ENCODE measurements at regions of chr6 and their contacts with region 1.

Region 1: DNA sequence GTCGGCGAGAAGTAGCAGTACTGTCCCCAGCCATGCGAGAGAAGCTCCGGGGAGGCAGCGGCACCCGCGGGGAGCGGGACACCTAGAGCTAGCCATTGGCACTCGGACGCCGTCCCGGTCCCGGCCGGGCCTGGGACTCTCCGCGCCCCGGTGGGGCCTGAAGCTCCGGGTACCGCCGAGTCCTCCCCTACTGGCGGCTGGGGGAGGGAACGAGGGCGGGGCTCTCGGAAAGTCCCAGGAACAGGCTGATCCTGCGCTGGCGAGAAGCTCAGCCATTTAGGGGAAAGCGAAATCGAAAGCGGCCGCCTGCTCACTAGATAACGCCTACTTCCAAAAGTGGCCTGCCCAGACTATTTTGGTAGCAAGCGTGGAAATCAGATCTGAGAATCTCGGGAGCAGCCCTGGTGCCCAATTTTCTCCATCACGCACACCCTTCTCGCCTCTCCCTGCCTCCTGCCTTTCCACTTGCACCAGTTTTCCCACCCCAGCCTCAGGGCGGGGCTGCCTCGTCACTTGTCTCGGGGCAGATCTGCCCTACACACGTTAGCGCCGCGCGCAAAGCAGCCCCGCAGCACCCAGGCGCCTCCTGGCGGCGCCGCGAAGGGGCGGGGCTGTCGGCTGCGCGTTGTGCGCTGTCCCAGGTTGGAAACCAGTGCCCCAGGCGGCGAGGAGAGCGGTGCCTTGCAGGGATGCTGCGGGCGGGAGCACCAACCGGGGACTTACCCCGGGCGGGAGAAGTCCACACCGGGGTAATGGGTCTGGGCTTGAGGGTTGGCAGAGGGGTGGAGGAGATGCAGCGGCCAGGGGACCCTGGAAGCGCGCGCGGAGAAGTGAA is at the starts of genes PSMB9 and TAP1:
- DNase-seq: peak; percentile 92
- H3K4me3 Mint-ChIP-seq: peak within 1 kb of the TSS; percentile 98
- H3K27ac Mint-ChIP-seq: peak within 1 kb of the TSS; percentile 99
- H3K4me1 Mint-ChIP-seq: peaks cover 71% of the 10 kb centered on the region
- H3K27me3 Mint-ChIP-seq: no peaks in the 10 kb centered on the region
- total RNA-seq, gene PSMB9: 249 and 253 TPM in 2 replicates
- total RNA-seq, gene TAP1: 284 and 290 TPM in 2 replicates

Region 2: DNA sequence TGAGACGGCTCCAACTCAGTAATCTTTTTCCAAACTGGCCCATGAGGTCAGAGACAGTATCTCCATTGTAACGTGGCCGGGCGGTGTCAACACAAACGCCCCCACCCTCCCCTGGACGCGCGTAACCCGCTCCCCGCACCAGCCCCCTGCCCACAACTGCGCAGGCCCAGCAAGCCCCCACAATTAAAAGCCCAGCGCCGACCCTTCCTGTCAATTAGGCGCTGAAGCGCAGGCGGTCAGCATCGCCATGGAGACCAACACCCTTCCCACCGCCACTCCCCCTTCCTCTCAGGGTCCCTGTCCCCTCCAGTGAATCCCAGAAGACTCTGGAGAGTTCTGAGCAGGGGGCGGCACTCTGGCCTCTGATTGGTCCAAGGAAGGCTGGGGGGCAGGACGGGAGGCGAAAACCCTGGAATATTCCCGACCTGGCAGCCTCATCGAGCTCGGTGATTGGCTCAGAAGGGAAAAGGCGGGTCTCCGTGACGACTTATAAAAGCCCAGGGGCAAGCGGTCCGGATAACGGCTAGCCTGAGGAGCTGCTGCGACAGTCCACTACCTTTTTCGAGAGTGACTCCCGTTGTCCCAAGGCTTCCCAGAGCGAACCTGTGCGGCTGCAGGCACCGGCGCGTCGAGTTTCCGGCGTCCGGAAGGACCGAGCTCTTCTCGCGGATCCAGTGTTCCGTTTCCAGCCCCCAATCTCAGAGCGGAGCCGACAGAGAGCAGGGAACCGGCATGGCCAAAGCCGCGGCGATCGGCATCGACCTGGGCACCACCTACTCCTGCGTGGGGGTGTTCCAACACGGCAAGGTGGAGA is 1038.5 kb before region 1 on chr6 and contains the starts of genes HSPA1A and HSPA1L:
- intact Hi-C with region 1: loop called (anchors 10 kb)
- DNase-seq: peak; percentile 75
- H3K4me3 Mint-ChIP-seq: peak within 1 kb of the TSS; percentile 93
- H3K27ac Mint-ChIP-seq: peak within 1 kb of the TSS; percentile 95
- H3K4me1 Mint-ChIP-seq: peaks cover 50% of the 10 kb centered on the region
- H3K27me3 Mint-ChIP-seq: no peaks in the 10 kb centered on the region
- total RNA-seq, gene HSPA1A: 173 and 175 TPM in 2 replicates
- total RNA-seq, gene HSPA1L: 2.2 and 2.9 TPM in 2 replicates

Region 3: DNA sequence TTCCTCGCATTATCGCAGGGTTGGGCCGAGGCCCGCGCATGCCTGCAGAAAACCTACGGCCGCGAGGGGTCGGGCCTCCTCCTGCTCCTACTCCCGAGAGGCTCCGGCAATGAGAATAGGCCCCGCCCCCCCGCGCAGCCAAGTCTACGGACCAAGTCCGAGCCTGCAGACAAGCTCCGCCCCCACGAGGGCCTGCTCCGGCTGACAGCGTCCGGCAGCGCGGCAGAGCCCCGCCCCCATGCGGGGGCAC is 658.2 kb before region 1 on chr6:
- intact Hi-C with region 1: loop called (anchors 2 kb)
- DNase-seq: peak; percentile 100
- H3K4me3 Mint-ChIP-seq: peak overlapping the region; percentile 97
- H3K27ac Mint-ChIP-seq: peak overlapping the region; percentile 98
- H3K4me1 Mint-ChIP-seq: peaks cover 48% of the 10 kb centered on the region
- H3K27me3 Mint-ChIP-seq: peaks cover 2% of the 10 kb centered on the region

Region 4: DNA sequence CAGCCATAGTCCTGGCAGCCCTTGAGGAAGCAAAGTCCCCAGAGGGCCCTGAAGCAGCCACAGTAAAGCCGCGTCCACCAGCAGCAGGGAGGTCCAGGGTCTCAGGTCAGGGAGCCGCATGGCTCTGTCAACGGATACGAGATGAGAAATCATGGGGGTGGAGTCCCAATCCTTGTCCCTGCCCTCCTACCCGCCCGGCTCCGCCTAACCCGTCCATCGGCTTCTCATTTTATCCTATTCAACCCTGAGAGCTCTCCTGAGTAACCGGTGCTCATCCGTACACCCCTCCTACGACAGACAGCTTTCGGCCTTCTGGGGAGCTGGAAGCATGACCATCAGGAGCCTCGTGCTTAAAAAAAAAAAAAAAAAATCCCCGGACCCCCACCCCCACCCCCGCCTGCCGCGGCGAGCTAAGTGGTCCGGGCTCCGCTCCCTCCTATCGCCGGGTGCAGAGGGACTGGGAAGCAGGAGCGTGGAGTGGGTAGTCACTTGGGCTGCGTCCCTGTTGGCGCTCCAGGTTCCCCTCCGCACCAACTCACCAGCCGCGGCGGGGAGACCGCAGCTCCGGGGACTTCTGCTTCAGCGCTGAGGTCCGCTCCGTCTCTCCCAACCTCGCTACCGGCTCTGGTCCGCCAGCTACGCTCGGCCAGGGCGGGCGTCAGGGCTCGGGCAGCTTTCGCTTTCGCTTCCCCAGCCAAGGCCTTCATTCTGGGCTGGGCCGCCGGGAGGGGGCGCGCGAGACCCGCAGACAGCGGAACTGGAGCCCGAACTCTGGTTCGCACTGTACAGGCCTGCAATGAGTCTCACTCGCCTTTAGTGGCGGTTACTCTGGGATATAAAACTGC is 15.4 kb before region 1 on chr6 and contains the start of gene TAP2:
- intact Hi-C with region 1: loop called (anchors 1 kb)
- DNase-seq: peak; percentile 97
- H3K4me3 Mint-ChIP-seq: peak within 1 kb of the TSS; percentile 79
- H3K27ac Mint-ChIP-seq: peak within 1 kb of the TSS; percentile 89
- H3K4me1 Mint-ChIP-seq: peaks cover 87% of the 10 kb centered on the region
- H3K27me3 Mint-ChIP-seq: no peaks in the 10 kb centered on the region
- total RNA-seq, gene TAP2: 160 and 167 TPM in 2 replicates

Region 5: GRCh38 chr6:32894080-32895005 is 40.6 kb after region 1 on chr6:
- intact Hi-C with region 1: loop called (anchors 1 kb)
- DNase-seq: peak; percentile 95
- H3K4me3 Mint-ChIP-seq: peak overlapping the region; percentile 99
- H3K27ac Mint-ChIP-seq: peak overlapping the region; percentile 92
- H3K4me1 Mint-ChIP-seq: peaks cover 48% of the 10 kb centered on the region
- H3K27me3 Mint-ChIP-seq: peaks cover 12% of the 10 kb centered on the region

Measured in activated T-helper 1 cell treated with anti-CD3 and anti-CD28 coated beads, Interleukin-12 subunit alpha, Interleukin-12 subunit beta, Interleukin-2, Interleukin-4 antibody, amounts not matched to agents 30 ng/mL and 10 ng/mL and 1 ng/mL, durations not matched to agents 14 hours and 24 hours and 36 hours (primary cell).